Thyroid gland (tissue), 4 donors: ENCODE measurements at regions of chr5 and their contacts with region 1.

Region 1: DNA sequence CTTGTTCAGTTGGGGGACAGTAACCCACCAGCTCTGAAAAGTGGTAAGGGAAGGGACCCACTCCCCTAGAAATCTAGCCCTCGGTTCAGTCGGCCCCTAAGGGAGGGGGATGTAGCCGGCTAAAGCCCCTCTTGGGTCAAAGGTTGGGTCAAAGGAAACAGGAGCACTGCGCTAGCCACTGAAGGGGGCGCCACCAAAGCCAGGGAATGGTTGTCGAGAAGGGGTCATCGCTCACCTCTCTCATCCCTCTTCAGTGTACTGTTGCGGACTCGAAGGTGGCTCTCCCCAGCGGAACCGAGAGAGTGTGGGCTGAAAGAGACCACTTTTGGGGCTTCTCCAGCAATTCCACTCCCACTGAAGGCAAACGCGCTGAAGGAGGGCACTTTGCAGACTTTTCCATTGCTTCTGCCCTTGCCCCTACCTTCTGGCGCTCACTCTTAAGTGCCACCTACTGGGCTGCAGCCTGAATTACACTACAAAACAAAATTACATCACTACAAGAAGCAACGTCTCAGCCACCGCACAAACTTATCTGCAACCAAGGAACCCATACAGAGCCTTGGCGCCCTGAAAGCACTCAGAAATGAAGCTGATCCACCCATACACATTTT is 396.9 kb downstream of the PDE4D start:
- DNase-seq: no peak
- H3K4me3 ChIP-seq: no peak overlapping the region
- H3K27ac ChIP-seq: no peak overlapping the region
- H3K4me1 ChIP-seq: no peaks in the 10 kb centered on the region
- H3K27me3 ChIP-seq: no peaks in the 10 kb centered on the region
- CTCF ChIP-seq: peak in 3 of 6 experiments; percentile 28 to 39 (median 32)
- POLR2A ChIP-seq: no peak

Region 2: GRCh38 chr5:59390074-59390659 is 106.5 kb before region 1 on chr5:
- intact Hi-C with region 1: loop called (anchors 10 kb)
- DNase-seq: no peak
- H3K4me3 ChIP-seq: no peak overlapping the region
- H3K27ac ChIP-seq: no peak overlapping the region
- H3K4me1 ChIP-seq: no peaks in the 10 kb centered on the region
- H3K27me3 ChIP-seq: no peaks in the 10 kb centered on the region
- CTCF ChIP-seq: peak; percentile 29 to 66 (median 51)
- POLR2A ChIP-seq: no peak